CD8-positive, alpha-beta T cell (primary cell): ENCODE measurements at regions of chr1 and their contacts with region 1.

Region 1: DNA sequence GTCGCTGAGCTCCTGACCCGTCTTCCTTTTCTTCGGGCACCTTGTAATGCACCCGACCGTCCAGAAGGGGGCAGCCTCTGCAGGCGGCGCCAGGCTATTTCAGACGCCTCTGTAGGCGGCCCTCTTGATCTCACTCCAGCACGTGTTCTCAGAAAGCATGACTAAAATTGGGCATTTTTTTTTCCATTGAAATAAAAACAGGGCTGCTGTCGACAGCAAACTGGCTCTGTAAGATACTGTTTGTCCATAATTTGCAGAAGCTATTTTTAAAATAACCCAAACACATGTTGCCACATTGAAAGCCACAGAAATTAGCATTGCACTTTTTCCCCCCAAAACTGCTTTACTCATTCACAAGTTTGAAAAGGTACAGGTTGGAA is 78.0 kb downstream of the STUM start:
- DNase-seq: peak; percentile 53 to 86 (median 78)
- ATAC-seq: peak; percentile 97
- H3K4me3 ChIP-seq: peak overlapping the region; percentile 14 to 31
- H3K4me3 Mint-ChIP-seq: peak overlapping the region; percentile 63
- H3K27ac ChIP-seq: no peak overlapping the region
- H3K27ac Mint-ChIP-seq: no peak overlapping the region
- H3K4me1 ChIP-seq: peaks cover 12% of the 10 kb centered on the region
- H3K4me1 Mint-ChIP-seq: peaks cover 22% of the 10 kb centered on the region
- H3K27me3 ChIP-seq: no peaks in the 10 kb centered on the region
- H3K27me3 Mint-ChIP-seq: no peaks in the 10 kb centered on the region
- CTCF ChIP-seq: peak; percentile 98

Region 2: DNA sequence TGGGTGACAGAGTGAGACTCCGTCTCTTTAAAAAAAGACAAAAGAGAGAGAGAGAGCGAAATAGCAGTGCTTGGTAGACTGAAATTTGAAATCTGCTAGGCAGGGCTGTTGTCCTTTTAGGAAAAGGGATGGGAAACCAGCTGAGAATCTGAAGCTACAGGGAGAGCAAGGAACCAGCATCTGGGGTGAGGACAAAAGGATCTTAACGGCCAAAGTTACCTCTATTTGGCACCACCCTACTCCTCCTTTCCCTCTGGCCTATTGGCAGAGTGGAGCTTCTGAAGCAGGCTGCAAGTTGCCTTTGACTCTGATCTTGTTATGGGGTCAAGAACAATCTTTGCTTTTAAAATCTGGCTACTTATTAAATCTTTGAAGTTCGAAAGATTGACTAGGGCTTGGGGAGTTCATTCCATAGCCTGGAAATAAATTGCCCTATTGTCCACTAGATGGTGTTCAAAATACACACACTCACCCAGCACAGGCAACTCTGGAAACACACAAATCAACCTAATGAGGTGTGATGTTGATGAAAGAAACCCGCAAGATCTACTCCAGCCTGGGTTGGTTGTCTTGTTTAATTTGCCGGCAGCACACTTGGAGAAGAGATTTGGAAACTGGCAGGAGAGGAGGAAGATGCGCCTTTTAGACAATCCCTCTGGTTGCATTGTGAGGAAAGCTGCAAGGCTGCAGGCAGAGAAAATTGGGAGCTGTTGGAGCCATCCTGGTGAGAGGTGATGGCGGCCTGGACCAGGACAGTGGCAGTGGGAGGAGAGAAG is 202.2 kb before region 1 on chr1:
- CTCF ChIA-PET with region 1: interaction called, 11 read pairs
- POLR2A ChIA-PET with region 1: no interaction called
- intact Hi-C with region 1: loop called in 1 of 2 experiments (anchors 1 kb)
- DNase-seq: peak in 3 of 9 experiments; percentile 21 to 75 (median 59)
- ATAC-seq: peak; percentile 54
- H3K4me3 ChIP-seq: no peak overlapping the region
- H3K4me3 Mint-ChIP-seq: no peak overlapping the region
- H3K27ac ChIP-seq: peak overlapping the region in 1 of 2 experiments; percentile 47
- H3K27ac Mint-ChIP-seq: no peak overlapping the region
- H3K4me1 ChIP-seq: peaks cover 27% of the 10 kb centered on the region
- H3K4me1 Mint-ChIP-seq: peaks cover 35% of the 10 kb centered on the region
- H3K27me3 ChIP-seq: no peaks in the 10 kb centered on the region
- H3K27me3 Mint-ChIP-seq: no peaks in the 10 kb centered on the region
- CTCF ChIP-seq: peak; percentile 47

Region 3: GRCh38 chr1:226642876-226643576 is 16.5 kb after region 1 on chr1:
- CTCF ChIA-PET with region 1: interaction called, 20 read pairs
- POLR2A ChIA-PET with region 1: no interaction called
- intact Hi-C with region 1: no loop called
- DNase-seq: peak in 6 of 9 experiments; percentile 49 to 73 (median 66)
- ATAC-seq: peak; percentile 76
- H3K4me3 ChIP-seq: no peak overlapping the region
- H3K4me3 Mint-ChIP-seq: peak overlapping the region; percentile 54
- H3K27ac ChIP-seq: peak overlapping the region; percentile 27 to 34
- H3K27ac Mint-ChIP-seq: peak overlapping the region; percentile 89
- H3K4me1 ChIP-seq: peaks cover 57% of the 10 kb centered on the region
- H3K4me1 Mint-ChIP-seq: peaks cover 55% of the 10 kb centered on the region
- H3K27me3 ChIP-seq: no peaks in the 10 kb centered on the region
- H3K27me3 Mint-ChIP-seq: no peaks in the 10 kb centered on the region
- CTCF ChIP-seq: no peak

Region 4: GRCh38 chr1:226827968-226828513 is 201.5 kb after region 1 on chr1:
- CTCF ChIA-PET with region 1: interaction called, 218 read pairs
- POLR2A ChIA-PET with region 1: interaction called, 5 read pairs
- intact Hi-C with region 1: loop called (anchors 1 kb)
- DNase-seq: peak; percentile 86 to 98 (median 93)
- ATAC-seq: peak; percentile 99
- H3K4me3 ChIP-seq: peak overlapping the region; percentile 3 to 21
- H3K4me3 Mint-ChIP-seq: peak overlapping the region; percentile 58
- H3K27ac ChIP-seq: peak overlapping the region; percentile 46 to 73
- H3K27ac Mint-ChIP-seq: peak overlapping the region; percentile 69
- H3K4me1 ChIP-seq: peaks cover 10% of the 10 kb centered on the region
- H3K4me1 Mint-ChIP-seq: peaks cover 20% of the 10 kb centered on the region
- H3K27me3 ChIP-seq: no peaks in the 10 kb centered on the region
- H3K27me3 Mint-ChIP-seq: no peaks in the 10 kb centered on the region
- CTCF ChIP-seq: peak; percentile 94

Region 5: GRCh38 chr1:227437495-227438008 is 811.0 kb after region 1 on chr1:
- CTCF ChIA-PET with region 1: no interaction called
- POLR2A ChIA-PET with region 1: no interaction called
- intact Hi-C with region 1: loop called in 1 of 2 experiments (anchors 5 kb)
- DNase-seq: peak in 2 of 9 experiments; percentile 20 to 42
- ATAC-seq: no peak
- H3K4me3 ChIP-seq: no peak overlapping the region
- H3K4me3 Mint-ChIP-seq: no peak overlapping the region
- H3K27ac ChIP-seq: no peak overlapping the region
- H3K27ac Mint-ChIP-seq: no peak overlapping the region
- H3K4me1 ChIP-seq: no peaks in the 10 kb centered on the region
- H3K4me1 Mint-ChIP-seq: peaks cover 2% of the 10 kb centered on the region
- H3K27me3 ChIP-seq: peaks cover 0 to 5% of the 10 kb centered on the region in 2 experiments
- H3K27me3 Mint-ChIP-seq: peaks cover 30% of the 10 kb centered on the region
- CTCF ChIP-seq: no peak